GM12878 (cell line): ENCODE measurements at regions of chr11 and their contacts with region 1.

Region 1: DNA sequence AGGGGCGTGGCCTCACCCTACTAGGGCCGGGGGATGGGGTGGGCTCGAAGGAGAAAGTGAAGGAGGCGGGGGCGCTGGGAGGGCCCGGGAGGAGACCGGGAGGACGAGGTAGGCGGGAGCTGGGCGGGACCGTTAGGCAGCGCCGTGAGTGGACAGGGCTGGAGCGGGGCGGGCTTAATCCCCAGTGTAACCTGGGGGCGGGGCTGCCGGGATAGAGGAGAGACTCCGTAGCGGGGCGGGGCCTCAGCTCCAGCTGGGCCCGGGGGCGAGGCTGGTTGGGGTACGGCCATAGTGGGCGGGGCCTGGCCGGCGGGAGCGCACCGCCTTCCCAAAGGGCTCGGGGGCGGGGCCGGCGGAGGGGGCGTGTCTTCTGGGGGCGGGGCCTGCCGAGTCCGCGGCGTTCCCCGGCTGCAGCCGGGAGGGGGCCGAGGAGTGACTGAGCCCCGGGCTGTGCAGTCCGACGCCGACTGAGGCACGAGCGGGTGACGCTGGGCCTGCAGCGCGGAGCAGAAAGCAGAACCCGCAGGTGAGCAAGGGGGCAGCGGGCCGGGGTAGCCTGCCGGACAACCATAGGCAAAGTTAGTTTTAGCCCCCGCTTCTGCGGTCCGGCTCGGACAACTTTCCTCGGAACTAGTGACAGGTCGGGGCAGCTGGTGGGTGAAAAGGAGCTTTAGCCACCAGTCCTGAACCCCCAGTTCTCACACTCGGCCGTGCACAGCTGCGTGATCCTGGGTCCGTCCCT is at the start of gene CD82:
- DNase-seq: peak; percentile 84
- ATAC-seq: peak; percentile 84
- H3K4me3 ChIP-seq: peak within 1 kb of the TSS; percentile 89
- H3K27ac ChIP-seq: peak within 1 kb of the TSS; percentile 83
- H3K4me1 ChIP-seq: peaks cover 38% of the 10 kb centered on the region
- H3K27me3 ChIP-seq: no peaks in the 10 kb centered on the region
- CTCF ChIP-seq: peak in 2 of 3 experiments; percentile 17 to 32; a peak in 2 of 6 replicates
- EP300 ChIP-seq: no peak
- POLR2A ChIP-seq: peak; percentile 96
- RAD21 ChIP-seq: no peak
- polyA plus RNA-seq, gene CD82: 5.2 to 8.2 TPM

Region 2: DNA sequence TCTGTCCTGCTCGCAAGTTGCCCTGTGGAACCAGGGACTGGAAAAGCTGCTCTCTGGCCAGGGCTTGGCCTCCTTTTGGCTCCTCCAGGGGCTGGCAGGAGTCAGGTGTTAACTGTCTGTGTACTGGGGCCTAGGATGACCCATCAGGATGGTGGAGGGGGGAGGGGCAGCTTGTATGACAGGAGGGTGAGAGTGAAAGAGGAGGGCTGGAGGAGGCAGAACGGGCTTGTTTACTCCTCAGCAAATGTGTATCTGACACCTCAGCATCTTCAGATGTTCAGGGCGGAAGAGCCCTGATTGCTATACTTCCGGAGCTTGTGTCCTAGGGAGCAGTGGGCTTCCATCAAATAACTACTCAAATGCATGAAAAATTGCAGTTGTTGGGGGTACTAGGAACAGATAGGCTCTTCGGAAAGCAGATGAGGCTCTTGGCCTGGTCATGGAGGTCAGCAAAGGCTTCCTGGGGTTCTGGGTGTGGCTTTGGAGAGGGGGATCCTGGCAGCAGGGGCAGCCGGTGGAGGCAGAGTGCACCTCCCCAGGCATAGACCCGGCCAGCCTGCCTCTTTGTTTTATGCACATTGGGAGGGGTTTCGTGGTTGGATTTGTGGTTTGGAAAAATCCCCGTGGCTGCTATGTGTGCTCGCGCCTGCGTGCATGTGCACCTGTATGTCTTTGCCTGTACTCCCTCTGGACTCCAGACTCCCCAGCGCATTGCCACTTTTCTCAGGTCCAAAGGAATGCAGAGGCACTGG is 31.3 kb after region 1 on chr11:
- CTCF ChIA-PET with region 1: interaction called, 88 read pairs
- POLR2A ChIA-PET with region 1: interaction called, 434 read pairs
- RAD21 ChIA-PET with region 1: interaction called, 133 read pairs
- SMC1A ChIA-PET with region 1: interaction called, 111 read pairs
- in situ Hi-C with region 1: no loop called
- intact Hi-C with region 1: loop called (anchors 2 kb)
- DNase-seq: peak; percentile 84
- ATAC-seq: peak; percentile 73
- H3K4me3 ChIP-seq: peak overlapping the region; percentile 49; the same call in 1 of the 2 replicates
- H3K27ac ChIP-seq: peak overlapping the region; percentile 91
- H3K4me1 ChIP-seq: peaks cover 71% of the 10 kb centered on the region
- H3K27me3 ChIP-seq: no peaks in the 10 kb centered on the region
- CTCF ChIP-seq: no peak
- EP300 ChIP-seq: no peak
- POLR2A ChIP-seq: peak; percentile 63; the same call in 1 of the 2 replicates
- RAD21 ChIP-seq: no peak

Region 3: GRCh38 chr11:44727373-44728287 is 162.2 kb after region 1 on chr11:
- CTCF ChIA-PET with region 1: no interaction called
- POLR2A ChIA-PET with region 1: no interaction called
- RAD21 ChIA-PET with region 1: no interaction called
- SMC1A ChIA-PET with region 1: no interaction called
- in situ Hi-C with region 1: no loop called
- intact Hi-C with region 1: no loop called
- DNase-seq: no peak
- ATAC-seq: peak; percentile 90
- H3K4me3 ChIP-seq: peak overlapping the region; percentile 86
- H3K27ac ChIP-seq: no peak overlapping the region
- H3K4me1 ChIP-seq: peaks cover 11% of the 10 kb centered on the region
- H3K27me3 ChIP-seq: peaks cover 0 to 3% of the 10 kb centered on the region in 2 experiments; a peak in 3 of 4 replicates
- CTCF ChIP-seq: peak; percentile 77 to 95 (median 85)
- EP300 ChIP-seq: no peak
- POLR2A ChIP-seq: no peak
- RAD21 ChIP-seq: peak; percentile 61

Region 4: DNA sequence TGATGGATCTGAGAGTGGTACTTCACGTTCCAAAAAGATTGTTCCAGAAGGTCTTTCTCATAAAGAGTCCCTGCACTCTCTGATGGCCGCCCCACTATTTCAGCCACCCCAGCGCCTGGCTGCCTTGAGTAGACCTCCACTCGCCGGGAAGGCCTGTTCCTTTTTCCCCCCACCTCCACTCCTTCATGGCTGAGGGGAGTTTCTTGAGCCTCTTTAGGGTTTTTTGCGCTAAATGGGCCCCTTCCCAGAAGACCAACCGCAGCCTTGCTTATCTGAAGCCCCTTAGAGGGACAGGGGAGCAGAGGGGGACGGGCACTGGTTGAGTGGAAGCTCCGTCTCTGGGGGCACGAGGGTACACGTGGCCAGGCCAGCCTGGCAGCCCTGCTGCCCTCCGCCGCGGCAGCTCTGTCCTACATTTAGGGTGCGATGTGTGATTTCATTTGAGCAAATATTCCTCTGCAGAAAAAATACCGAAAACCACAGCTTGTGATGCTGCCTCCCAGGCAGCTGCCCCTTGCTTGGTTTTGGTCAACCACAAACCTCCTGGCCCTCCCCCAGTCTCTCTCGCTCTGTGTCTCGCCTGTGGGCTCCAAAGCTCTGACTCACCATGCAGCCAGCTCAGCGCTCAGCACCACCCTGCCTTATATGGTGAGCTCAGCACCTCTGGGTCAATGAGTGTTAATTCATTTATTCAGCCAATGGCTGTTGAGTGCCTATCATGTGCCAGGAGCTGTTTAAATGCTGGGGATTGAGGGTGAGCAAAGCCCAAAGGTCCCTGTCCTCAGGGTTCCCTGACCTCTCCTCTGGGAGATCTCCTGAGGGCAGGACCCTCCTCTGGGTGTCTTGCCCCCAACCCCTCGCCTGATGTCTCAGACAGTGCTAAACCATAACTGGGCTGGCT is 296.7 kb after region 1 on chr11:
- CTCF ChIA-PET with region 1: no interaction called
- POLR2A ChIA-PET with region 1: no interaction called
- RAD21 ChIA-PET with region 1: interaction called, 3 read pairs
- SMC1A ChIA-PET with region 1: interaction called, 3 read pairs
- in situ Hi-C with region 1: no loop called
- intact Hi-C with region 1: loop called (anchors 5 kb)
- DNase-seq: peak; percentile 86
- ATAC-seq: peak; percentile 99
- H3K4me3 ChIP-seq: peak overlapping the region; percentile 31; the same call in 1 of the 2 replicates
- H3K27ac ChIP-seq: peak overlapping the region; percentile 53
- H3K4me1 ChIP-seq: peaks cover 15% of the 10 kb centered on the region
- H3K27me3 ChIP-seq: no peaks in the 10 kb centered on the region; a peak in 2 of 4 replicates
- CTCF ChIP-seq: no peak
- EP300 ChIP-seq: peak; percentile 91 to 92
- POLR2A ChIP-seq: no peak
- RAD21 ChIP-seq: no peak